Natural killer cell (primary cell): ENCODE measurements at regions of chr3 and their contacts with region 1.

Region 1: DNA sequence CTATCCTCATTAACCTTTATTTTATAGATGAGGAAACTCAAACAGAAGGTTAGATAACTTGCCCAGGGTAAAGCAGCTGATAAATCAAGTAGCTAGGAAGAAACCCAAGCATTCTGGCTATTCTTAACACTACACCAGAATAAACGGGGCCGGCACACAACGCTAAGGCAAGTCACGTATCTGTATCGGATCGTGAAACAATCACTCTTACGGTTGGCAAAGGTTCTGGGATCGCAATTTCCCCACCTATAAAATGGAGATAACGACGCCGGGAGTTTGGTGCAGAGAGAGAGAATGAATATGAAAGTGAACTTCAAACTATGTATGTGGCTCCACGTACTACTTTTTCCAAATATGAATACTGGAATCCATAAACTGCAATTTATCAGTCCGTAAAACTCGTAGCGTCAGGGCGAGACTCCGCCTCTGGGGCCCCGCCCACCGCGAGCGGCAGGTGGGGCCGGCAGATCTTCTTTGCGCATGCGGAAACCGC is 252 bp upstream of the ARMC8 start:
- DNase-seq: peak; percentile 83 to 96
- ATAC-seq: peak; percentile 92 to 96 (median 93)
- H3K4me3 ChIP-seq: peak overlapping the region; percentile 87
- H3K4me3 Mint-ChIP-seq: peak overlapping the region; percentile 95
- H3K27ac ChIP-seq: peak overlapping the region; percentile 88
- H3K27ac Mint-ChIP-seq: peak overlapping the region; percentile 89 to 93
- H3K4me1 ChIP-seq: peaks cover 3% of the 10 kb centered on the region
- H3K4me1 Mint-ChIP-seq: peaks cover 42 to 46% of the 10 kb centered on the region in 2 donors
- H3K27me3 ChIP-seq: no peaks in the 10 kb centered on the region
- H3K27me3 Mint-ChIP-seq: peaks cover 10 to 33% of the 10 kb centered on the region in 2 donors
- CTCF ChIP-seq: no peak

Region 2: GRCh38 chr3:138174421-138175122 is 12.3 kb before region 1 on chr3 and contains the start of gene DBR1:
- intact Hi-C with region 1: loop called (anchors 1 kb)
- DNase-seq: peak; percentile 64 to 89
- ATAC-seq: peak; percentile 86 to 88 (median 87)
- H3K4me3 ChIP-seq: peak within 1 kb of the TSS; percentile 82
- H3K4me3 Mint-ChIP-seq: peak within 1 kb of the TSS; percentile 96
- H3K27ac ChIP-seq: peak within 1 kb of the TSS; percentile 70
- H3K27ac Mint-ChIP-seq: peak within 1 kb of the TSS; percentile 83 to 88
- H3K4me1 ChIP-seq: peaks cover 13% of the 10 kb centered on the region
- H3K4me1 Mint-ChIP-seq: peaks cover 25 to 27% of the 10 kb centered on the region in 2 donors
- H3K27me3 ChIP-seq: no peaks in the 10 kb centered on the region
- H3K27me3 Mint-ChIP-seq: peaks cover 5 to 10% of the 10 kb centered on the region in 2 donors
- CTCF ChIP-seq: no peak
- total RNA-seq, gene DBR1: 17.0 to 18.4 (median 17.5) TPM

Region 3: DNA sequence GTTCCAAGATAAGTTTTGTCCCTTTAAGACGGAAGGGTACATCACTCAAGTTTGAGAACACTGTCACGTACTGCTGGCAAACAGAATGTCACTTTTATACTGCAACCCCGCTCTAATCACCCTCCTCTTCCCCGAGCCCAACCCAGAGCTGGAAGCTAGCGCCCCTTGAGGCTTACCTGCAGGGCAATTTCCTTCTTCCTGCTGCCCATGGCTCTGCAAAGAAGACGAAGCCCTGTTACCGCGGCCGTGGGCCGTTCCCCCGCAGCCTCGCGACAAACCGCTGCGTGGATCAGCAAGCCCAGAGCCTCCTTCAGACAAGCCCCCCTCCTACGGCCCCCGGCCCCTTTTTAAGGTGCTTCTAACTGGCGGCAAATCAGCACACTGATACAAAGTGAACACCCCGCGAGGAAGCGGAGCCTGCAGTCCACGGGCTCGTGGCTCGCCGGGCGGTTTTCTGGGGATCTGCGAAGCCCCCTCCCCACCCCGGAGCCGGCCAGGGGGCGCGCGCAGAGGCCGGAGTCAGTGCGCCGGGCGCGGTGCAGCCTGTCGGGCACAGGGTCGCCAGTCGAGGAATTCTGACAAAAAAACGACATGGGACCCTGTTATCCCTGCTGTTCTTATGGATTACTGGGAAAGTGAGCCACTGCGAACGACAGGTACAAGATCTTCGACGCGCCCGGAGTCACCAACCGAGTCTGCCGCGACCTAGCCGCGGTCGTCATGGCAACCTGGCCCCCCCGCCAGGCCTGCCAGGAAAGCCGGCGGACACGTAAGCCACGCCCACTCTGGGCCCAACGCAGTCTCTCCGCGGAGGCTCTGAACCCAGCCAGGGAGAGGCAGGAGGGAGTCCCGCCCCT is 142.5 kb after region 1 on chr3 and contains the start of gene NME9:
- intact Hi-C with region 1: loop called (anchors 10 kb)
- DNase-seq: peak; percentile 73 to 96
- ATAC-seq: peak; percentile 86 to 92 (median 90)
- H3K4me3 ChIP-seq: peak within 1 kb of the TSS; percentile 49
- H3K4me3 Mint-ChIP-seq: peak within 1 kb of the TSS; percentile 91
- H3K27ac ChIP-seq: peak within 1 kb of the TSS; percentile 12
- H3K27ac Mint-ChIP-seq: peak within 1 kb of the TSS; percentile 53 to 80
- H3K4me1 ChIP-seq: peaks cover 4% of the 10 kb centered on the region
- H3K4me1 Mint-ChIP-seq: peaks cover 20 to 26% of the 10 kb centered on the region in 2 donors
- H3K27me3 ChIP-seq: no peaks in the 10 kb centered on the region
- H3K27me3 Mint-ChIP-seq: no peaks in the 10 kb centered on the region
- CTCF ChIP-seq: peak; percentile 48
- total RNA-seq, gene NME9: not detected

Region 4: GRCh38 chr3:139928708-139929505 is 1742.1 kb after region 1 on chr3:
- intact Hi-C with region 1: no loop called
- DNase-seq: no peak
- ATAC-seq: no peak
- H3K4me3 ChIP-seq: no peak overlapping the region
- H3K4me3 Mint-ChIP-seq: no peak overlapping the region
- H3K27ac ChIP-seq: no peak overlapping the region
- H3K27ac Mint-ChIP-seq: no peak overlapping the region
- H3K4me1 ChIP-seq: no peaks in the 10 kb centered on the region
- H3K4me1 Mint-ChIP-seq: no peaks in the 10 kb centered on the region
- H3K27me3 ChIP-seq: peaks cover 4% of the 10 kb centered on the region
- H3K27me3 Mint-ChIP-seq: peaks cover 4 to 35% of the 10 kb centered on the region in 2 donors
- CTCF ChIP-seq: no peak